ENCODE measurements at regions of chr1 and their contacts with region 1.

Region 1: DNA sequence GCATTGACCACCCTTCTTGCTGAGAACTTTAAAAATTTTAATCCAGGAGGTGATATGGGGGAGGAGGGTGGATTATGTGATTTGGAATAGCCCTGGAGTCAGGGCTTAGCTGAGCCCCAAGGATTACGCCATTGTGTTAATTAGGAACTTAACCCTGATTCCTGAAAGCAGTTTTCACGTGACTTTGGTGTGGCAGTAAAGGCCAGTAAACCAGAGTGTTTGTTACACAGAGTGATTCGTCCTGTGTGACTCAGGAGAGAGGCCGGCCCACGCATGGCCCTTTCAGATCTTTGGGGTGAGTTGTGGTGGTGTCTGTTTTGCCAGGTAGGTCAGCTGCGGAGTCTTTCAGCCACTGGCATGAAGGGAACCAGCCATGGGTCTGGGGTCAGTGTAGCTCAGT is 107.6 kb downstream of the NOS1AP start:
- DNase-seq: peak; percentile 52
- ATAC-seq: peak; percentile 45
- H3K4me3 ChIP-seq: no peak overlapping the region
- H3K27ac ChIP-seq: no peak overlapping the region
- H3K4me1 ChIP-seq: peaks cover 25% of the 10 kb centered on the region
- H3K27me3 ChIP-seq: no peaks in the 10 kb centered on the region
- CTCF ChIP-seq: no peak

Region 2: GRCh38 chr1:161973924-161974845 is 202.9 kb before region 1 on chr1:
- CTCF ChIA-PET with region 1: no interaction called
- POLR2A ChIA-PET with region 1: no interaction called
- intact Hi-C with region 1: no loop called
- DNase-seq: no peak
- ATAC-seq: no peak
- H3K4me3 ChIP-seq: no peak overlapping the region
- H3K27ac ChIP-seq: no peak overlapping the region
- H3K4me1 ChIP-seq: no peaks in the 10 kb centered on the region
- H3K27me3 ChIP-seq: no peaks in the 10 kb centered on the region
- CTCF ChIP-seq: no peak

Region 3: GRCh38 chr1:162046921-162047320 is 130.2 kb before region 1 on chr1:
- CTCF ChIA-PET with region 1: no interaction called
- POLR2A ChIA-PET with region 1: no interaction called
- intact Hi-C with region 1: no loop called
- DNase-seq: no peak
- ATAC-seq: no peak
- H3K4me3 ChIP-seq: no peak overlapping the region
- H3K27ac ChIP-seq: no peak overlapping the region
- H3K4me1 ChIP-seq: no peaks in the 10 kb centered on the region
- H3K27me3 ChIP-seq: no peaks in the 10 kb centered on the region
- CTCF ChIP-seq: no peak

Region 4: GRCh38 chr1:162069328-162070093 is 107.6 kb before region 1 on chr1 and contains the start of gene NOS1AP:
- CTCF ChIA-PET with region 1: no interaction called
- POLR2A ChIA-PET with region 1: no interaction called
- intact Hi-C with region 1: loop called (anchors 2 kb)
- DNase-seq: peak; percentile 88
- ATAC-seq: peak; percentile 94
- H3K4me3 ChIP-seq: peak within 1 kb of the TSS; percentile 86
- H3K27ac ChIP-seq: no peak within 1 kb of the TSS
- H3K4me1 ChIP-seq: peaks cover 19% of the 10 kb centered on the region
- H3K27me3 ChIP-seq: no peaks in the 10 kb centered on the region
- CTCF ChIP-seq: no peak
- total RNA-seq, gene NOS1AP: 1.6 and 2.6 TPM in 2 replicates

Region 5: DNA sequence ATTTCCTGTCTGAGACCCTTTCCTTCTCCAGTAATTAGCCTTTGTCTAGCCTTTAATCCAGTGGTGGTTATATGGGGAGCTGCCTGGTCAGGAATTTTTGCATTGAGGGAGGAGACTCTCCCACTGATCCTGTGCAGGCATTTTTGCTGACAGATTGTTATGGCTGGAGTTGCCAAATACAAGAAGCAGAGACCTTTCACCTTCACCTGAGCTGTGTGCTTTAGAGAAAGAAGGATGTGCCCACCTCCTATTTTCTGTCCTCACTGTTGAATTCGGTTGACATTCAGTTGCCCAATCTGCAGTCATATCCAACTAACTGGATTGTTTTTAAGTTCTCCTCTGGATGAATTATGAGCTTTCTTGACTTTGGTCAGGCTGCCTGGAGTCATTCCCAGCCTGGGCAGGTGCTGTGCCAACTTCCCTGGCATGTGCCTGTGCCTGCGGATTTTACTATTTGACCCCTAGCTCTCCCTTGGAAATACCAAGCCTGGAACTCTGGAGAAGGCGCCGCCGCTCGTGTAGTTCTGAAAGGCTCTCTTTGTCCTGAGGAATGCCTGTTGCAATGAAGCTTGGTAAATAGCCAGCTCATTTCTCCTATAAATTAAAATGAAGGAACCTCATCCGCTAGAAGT is 36.3 kb after region 1 on chr1:
- CTCF ChIA-PET with region 1: no interaction called
- POLR2A ChIA-PET with region 1: no interaction called
- intact Hi-C with region 1: loop called (anchors 1 kb)
- DNase-seq: peak; percentile 94
- ATAC-seq: peak; percentile 87
- H3K4me3 ChIP-seq: no peak overlapping the region
- H3K27ac ChIP-seq: no peak overlapping the region
- H3K4me1 ChIP-seq: peaks cover 19% of the 10 kb centered on the region
- H3K27me3 ChIP-seq: no peaks in the 10 kb centered on the region
- CTCF ChIP-seq: no peak

Region 6: GRCh38 chr1:162222014-162222413 is 44.9 kb after region 1 on chr1:
- CTCF ChIA-PET with region 1: no interaction called
- POLR2A ChIA-PET with region 1: no interaction called
- intact Hi-C with region 1: loop called (anchors 2 kb)
- DNase-seq: no peak
- ATAC-seq: no peak
- H3K4me3 ChIP-seq: no peak overlapping the region
- H3K27ac ChIP-seq: no peak overlapping the region
- H3K4me1 ChIP-seq: peaks cover 25% of the 10 kb centered on the region
- H3K27me3 ChIP-seq: no peaks in the 10 kb centered on the region
- CTCF ChIP-seq: no peak

Region 7: GRCh38 chr1:162276493-162276892 is 99.4 kb after region 1 on chr1:
- CTCF ChIA-PET with region 1: no interaction called
- POLR2A ChIA-PET with region 1: no interaction called
- intact Hi-C with region 1: loop called (anchors 5 kb)
- DNase-seq: peak; percentile 84
- ATAC-seq: peak; percentile 68
- H3K4me3 ChIP-seq: no peak overlapping the region
- H3K27ac ChIP-seq: no peak overlapping the region
- H3K4me1 ChIP-seq: no peaks in the 10 kb centered on the region
- H3K27me3 ChIP-seq: no peaks in the 10 kb centered on the region
- CTCF ChIP-seq: peak; percentile 91

Measured in PC-3 (cell line).